ENCODE measurements at regions of chr1 and their contacts with region 1.

Region 1: GRCh38 chr1:41812051-41812450 is 106.7 kb downstream of the HIVEP3 start:
- DNase-seq: peak; percentile 89
- H3K4me3 Mint-ChIP-seq: no peak overlapping the region
- H3K27ac Mint-ChIP-seq: peak overlapping the region; percentile 34
- H3K4me1 Mint-ChIP-seq: peaks cover 54% of the 10 kb centered on the region
- H3K27me3 Mint-ChIP-seq: no peaks in the 10 kb centered on the region

Region 2: DNA sequence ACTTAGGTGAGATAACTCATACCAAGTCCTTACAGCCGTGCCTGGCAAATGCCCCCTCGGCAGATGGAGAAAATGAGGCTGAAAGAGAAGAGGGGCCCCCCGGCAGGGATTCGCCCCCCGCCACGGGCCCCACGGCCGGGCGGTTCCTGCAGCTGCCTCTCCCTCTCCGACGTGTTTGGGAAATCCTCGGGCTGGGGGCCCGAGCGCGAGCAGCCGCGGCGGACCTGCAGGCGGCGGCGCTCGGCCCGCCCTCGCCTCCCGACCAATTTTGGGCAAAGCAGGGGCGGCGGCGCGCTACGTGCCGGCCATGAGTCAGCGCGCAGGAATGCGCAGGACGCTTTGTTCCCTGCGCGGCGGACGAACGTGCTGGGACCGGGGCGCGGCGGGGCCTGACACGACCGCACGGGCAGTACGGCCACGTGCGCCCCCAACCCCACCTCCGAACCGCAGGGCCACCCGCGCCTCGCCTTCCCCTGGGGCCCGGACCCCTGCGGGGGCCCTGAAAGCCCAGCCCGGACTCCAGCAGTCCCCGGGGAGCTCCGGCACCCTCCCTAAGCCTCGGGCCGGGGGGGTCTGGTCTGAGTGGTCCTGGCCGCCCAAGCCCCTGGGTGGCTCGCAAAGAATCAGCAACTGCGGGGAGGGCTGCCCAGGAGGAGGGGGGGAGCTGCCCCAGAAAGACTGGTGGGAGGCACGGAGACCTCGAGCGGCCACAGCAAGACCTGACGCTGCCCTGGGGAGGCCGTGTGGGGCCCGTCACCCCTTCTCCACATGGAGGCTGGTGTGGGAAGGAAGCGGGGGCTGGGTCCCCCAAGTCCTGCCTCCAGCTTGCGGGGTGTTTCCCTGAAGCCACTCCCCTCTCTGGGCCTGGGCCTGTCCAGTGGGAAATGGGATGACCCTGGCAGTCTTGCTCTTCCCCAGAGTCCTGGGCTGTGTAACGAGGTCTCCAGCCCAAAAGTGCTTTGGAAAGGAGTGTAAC is 315.7 kb before region 1 on chr1:
- intact Hi-C with region 1: loop called (anchors 10 kb)
- DNase-seq: peak; percentile 82
- H3K4me3 Mint-ChIP-seq: peak overlapping the region; percentile 68
- H3K27ac Mint-ChIP-seq: no peak overlapping the region
- H3K4me1 Mint-ChIP-seq: peaks cover 10% of the 10 kb centered on the region
- H3K27me3 Mint-ChIP-seq: peaks cover 5% of the 10 kb centered on the region

Region 3: DNA sequence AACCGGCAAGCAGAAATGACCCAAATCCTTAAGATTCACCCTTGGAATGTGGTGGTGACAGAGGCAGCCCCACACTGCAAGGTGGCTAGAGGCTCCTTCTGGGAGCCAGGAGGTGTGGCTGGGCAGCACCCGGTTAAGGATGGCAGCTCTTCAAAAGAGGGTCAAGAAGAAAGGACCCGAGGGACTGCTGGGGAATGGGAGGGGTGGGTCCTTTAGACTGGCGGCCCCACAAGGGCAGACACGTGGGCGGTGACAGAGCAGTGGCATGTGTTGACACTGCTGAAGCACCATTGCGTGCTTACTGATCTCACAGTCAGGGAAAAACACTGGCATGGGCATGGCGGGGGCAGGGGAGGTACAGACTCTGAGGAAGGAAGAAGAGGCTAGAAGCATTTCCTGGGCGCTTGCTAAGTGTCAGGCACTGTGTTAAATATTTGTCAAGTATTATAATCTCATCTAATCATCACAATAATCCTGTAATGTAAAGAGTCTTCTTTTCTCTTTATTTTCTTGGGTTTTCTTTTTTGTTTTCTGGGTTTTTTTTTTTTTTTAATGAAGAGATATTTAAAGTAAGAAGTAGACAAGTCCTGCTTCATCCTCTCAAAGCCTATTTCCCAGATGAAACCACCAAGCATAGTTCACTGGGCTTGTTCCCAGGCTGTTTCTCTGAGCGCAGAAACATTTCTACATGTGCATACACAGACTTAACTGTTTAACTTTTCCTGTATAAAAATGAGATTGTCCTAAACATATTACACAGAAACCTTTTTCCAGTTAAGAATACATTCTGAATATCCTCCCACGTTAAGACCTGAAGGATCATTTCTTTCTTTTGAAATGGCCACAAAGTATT is 161.8 kb before region 1 on chr1:
- intact Hi-C with region 1: no loop called
- DNase-seq: peak; percentile 72
- H3K4me3 Mint-ChIP-seq: peak overlapping the region; percentile 55
- H3K27ac Mint-ChIP-seq: peak overlapping the region; percentile 80
- H3K4me1 Mint-ChIP-seq: peaks cover 76% of the 10 kb centered on the region
- H3K27me3 Mint-ChIP-seq: no peaks in the 10 kb centered on the region

Region 4: DNA sequence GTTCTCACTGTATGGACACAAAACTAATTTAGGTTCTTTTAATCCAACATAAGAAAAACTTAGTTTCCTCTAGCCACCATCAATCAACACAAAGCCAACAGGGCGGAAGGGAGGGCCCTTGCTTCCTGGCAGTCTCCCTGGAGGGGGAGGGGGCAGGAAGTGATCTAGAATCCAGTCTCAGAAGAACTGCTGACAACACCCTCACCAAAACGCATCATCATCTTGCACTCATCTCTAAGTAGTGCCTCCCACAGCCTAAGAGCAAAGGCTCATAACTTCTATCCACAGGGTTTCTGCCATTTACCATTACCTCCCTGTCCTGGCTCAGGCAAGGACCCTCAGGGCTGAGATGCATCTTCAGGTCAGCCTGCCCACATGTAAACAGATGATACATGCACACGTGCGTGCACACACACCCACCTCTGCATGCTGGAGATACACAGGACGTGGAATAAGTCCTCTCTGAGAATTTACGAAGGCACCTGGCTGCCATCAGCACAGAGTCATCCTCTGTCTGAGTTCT is 86.2 kb after region 1 on chr1:
- intact Hi-C with region 1: loop called (anchors 2 kb)
- DNase-seq: peak; percentile 95
- H3K4me3 Mint-ChIP-seq: peak overlapping the region; percentile 68
- H3K27ac Mint-ChIP-seq: peak overlapping the region; percentile 89
- H3K4me1 Mint-ChIP-seq: peaks cover 77% of the 10 kb centered on the region
- H3K27me3 Mint-ChIP-seq: no peaks in the 10 kb centered on the region

Region 5: GRCh38 chr1:42240966-42241755 is 429.1 kb after region 1 on chr1:
- intact Hi-C with region 1: no loop called
- DNase-seq: no peak
- H3K4me3 Mint-ChIP-seq: no peak overlapping the region
- H3K27ac Mint-ChIP-seq: no peak overlapping the region
- H3K4me1 Mint-ChIP-seq: peaks cover 7% of the 10 kb centered on the region
- H3K27me3 Mint-ChIP-seq: no peaks in the 10 kb centered on the region

Measured in activated CD4-positive, alpha-beta T cell treated with anti-CD3 and anti-CD28 coated beads, Interleukin-2, amount 10 ng/mL, durations not matched to agents 24 days and 14 days (primary cell).